Activated CD4-positive, alpha-beta T cell treated with anti-CD3 and anti-CD28 coated beads, Interleukin-2, amount 10 ng/mL, durations not matched to agents 24 days and 14 days (primary cell): ENCODE measurements at regions of chr1 and their contacts with region 1.

Region 1: DNA sequence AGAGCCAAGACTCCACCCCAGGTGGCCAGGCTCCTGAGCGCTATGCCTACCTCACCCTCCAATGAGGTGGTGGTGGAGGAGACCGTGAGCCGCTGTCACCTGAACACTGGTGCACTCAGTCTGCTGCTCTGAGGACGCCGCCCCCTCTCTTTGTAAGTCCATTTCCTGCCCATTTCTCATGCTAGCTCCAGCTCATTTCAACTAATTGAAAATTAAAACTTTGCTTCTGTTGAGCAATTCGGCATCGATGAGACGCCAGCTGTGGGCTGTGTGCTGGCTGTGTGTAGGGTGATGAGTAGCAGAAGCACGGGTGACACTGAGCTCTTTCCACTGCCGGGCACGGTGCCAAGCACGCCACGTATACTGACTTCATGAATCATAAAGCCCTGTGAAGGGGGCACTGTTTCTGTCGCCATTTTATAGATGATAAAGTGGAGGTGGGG is 11.2 kb downstream of the TNFRSF1B start:
- DNase-seq: peak; percentile 89
- H3K4me3 Mint-ChIP-seq: peak overlapping the region; percentile 80
- H3K27ac Mint-ChIP-seq: peak overlapping the region; percentile 88
- H3K4me1 Mint-ChIP-seq: peaks cover 80% of the 10 kb centered on the region
- H3K27me3 Mint-ChIP-seq: no peaks in the 10 kb centered on the region

Region 2: DNA sequence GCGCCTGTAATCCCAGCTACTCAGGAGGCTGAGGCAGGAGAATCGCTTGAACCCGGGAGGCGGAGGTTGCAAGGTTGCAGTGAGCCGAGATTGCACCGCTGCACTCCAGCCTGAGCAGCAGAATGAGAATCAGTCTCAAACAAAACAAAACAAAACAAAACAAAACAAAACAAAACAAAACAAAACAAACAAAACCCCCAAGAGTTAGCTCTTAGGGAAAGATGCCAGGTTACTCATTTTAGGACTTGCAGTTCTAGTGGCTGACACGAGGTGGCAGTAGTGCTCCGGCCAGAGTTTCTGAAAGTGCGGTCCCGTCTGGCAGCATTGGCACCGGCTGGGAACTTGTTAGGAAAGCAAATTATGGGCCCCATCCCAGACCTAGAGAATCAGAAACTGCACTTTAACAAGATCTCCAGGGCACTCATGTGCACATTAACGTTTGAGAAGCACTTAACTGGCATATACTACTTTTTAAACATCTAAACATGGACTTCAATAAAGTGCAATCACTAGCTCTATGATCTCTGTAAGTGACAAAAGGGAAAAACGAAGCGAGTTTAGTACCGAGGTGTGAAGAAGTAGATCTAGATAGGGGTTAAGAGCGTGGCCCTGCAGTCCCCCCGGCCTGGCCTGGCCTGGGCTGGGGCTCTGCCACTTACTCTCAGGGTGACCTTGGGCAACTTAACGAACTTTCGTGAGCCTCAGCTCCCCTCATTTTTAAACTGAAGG is 53.2 kb before region 1 on chr1:
- intact Hi-C with region 1: loop called (anchors 1 kb)
- DNase-seq: peak; percentile 94
- H3K4me3 Mint-ChIP-seq: peak overlapping the region; percentile 38
- H3K27ac Mint-ChIP-seq: peak overlapping the region; percentile 49
- H3K4me1 Mint-ChIP-seq: peaks cover 35% of the 10 kb centered on the region
- H3K27me3 Mint-ChIP-seq: no peaks in the 10 kb centered on the region

Region 3: DNA sequence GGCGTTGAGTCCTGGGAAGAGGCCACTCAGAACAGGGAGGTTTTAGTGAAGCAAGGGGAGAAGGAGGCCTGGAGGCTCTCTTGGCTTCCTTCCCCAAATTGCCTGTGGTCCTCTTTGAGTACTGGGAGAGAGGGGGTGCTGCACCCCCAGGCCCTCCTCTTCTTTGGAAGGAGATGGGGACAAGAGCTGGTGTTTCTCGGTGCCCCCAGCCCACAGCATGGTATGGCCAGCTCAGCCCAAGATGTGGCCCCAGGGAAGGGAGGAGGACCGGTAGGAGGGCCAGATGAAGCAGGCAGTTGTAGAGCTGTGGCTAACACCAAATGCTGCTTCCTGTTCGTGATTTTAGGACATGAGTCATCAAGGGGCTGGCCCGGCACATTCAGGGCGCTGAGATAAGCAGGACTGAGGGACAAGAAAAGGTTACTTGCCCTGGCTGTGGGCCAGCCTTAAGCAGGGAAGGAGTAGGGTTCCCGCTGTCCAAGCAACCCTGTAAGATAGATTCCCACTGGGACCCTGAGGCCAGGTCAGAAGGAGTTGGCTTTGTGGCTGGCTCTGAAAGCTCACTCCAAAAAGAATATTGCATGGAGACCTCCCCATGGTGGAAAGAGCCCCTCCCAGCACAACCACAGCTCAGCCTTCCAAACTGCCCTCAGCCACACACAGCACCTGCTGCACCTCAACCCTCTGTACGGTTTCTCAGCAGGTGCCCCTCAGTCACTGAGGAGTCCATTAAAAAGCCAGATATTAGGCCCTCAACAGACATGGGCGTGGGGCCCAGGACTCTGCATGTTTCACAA is 16.2 kb before region 1 on chr1:
- intact Hi-C with region 1: loop called (anchors 1 kb)
- DNase-seq: peak; percentile 93
- H3K4me3 Mint-ChIP-seq: peak overlapping the region; percentile 76
- H3K27ac Mint-ChIP-seq: peak overlapping the region; percentile 95
- H3K4me1 Mint-ChIP-seq: peaks cover 77% of the 10 kb centered on the region
- H3K27me3 Mint-ChIP-seq: no peaks in the 10 kb centered on the region

Region 4: GRCh38 chr1:12166834-12167492 is 11.1 kb before region 1 on chr1 and contains the start of gene TNFRSF1B:
- intact Hi-C with region 1: loop called (anchors 1 kb)
- DNase-seq: peak; percentile 95
- H3K4me3 Mint-ChIP-seq: peak within 1 kb of the TSS; percentile 100
- H3K27ac Mint-ChIP-seq: peak within 1 kb of the TSS; percentile 100
- H3K4me1 Mint-ChIP-seq: peaks cover 71% of the 10 kb centered on the region
- H3K27me3 Mint-ChIP-seq: no peaks in the 10 kb centered on the region
- total RNA-seq, gene TNFRSF1B: 145 TPM in 2 replicates

Region 5: DNA sequence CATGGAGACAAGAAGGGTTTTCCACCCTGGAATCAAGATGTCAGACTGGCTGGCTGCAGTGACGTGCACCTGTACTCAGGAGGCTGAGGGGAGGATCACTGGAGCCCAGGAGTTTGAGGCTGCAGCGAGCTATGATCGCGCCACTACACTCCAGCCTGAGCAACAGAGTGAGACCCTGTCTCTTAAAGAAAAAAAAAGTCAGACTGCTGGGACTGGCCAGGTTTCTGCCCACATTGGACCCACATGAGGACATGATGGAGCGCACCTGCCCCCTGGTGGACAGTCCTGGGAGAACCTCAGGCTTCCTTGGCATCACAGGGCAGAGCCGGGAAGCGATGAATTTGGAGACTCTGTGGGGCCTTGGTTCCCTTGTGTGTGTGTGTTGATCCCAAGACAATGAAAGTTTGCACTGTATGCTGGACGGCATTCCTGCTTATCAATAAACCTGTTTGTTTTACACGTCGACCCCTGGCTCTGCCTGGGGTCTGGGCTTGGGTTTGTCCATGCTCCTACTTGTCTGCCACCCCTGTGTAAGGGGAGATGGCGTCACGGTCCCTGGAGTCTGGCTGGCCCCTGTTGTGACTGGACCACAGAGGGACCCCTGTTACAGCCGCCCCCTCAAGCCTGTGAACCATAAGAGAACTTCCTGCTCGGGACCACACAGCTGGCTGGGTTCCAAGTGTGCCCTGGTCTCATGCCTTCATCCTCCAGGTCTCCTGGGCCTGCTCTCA is 30.9 kb after region 1 on chr1:
- intact Hi-C with region 1: loop called (anchors 1 kb)
- DNase-seq: peak; percentile 95
- H3K4me3 Mint-ChIP-seq: no peak overlapping the region
- H3K27ac Mint-ChIP-seq: peak overlapping the region; percentile 59
- H3K4me1 Mint-ChIP-seq: peaks cover 38% of the 10 kb centered on the region
- H3K27me3 Mint-ChIP-seq: peaks cover 2% of the 10 kb centered on the region

Region 6: GRCh38 chr1:12229386-12229834 is 51.4 kb after region 1 on chr1:
- intact Hi-C with region 1: no loop called
- DNase-seq: no peak
- H3K4me3 Mint-ChIP-seq: peak overlapping the region; percentile 56
- H3K27ac Mint-ChIP-seq: no peak overlapping the region
- H3K4me1 Mint-ChIP-seq: peaks cover 8% of the 10 kb centered on the region
- H3K27me3 Mint-ChIP-seq: peaks cover 6% of the 10 kb centered on the region

Region 7: DNA sequence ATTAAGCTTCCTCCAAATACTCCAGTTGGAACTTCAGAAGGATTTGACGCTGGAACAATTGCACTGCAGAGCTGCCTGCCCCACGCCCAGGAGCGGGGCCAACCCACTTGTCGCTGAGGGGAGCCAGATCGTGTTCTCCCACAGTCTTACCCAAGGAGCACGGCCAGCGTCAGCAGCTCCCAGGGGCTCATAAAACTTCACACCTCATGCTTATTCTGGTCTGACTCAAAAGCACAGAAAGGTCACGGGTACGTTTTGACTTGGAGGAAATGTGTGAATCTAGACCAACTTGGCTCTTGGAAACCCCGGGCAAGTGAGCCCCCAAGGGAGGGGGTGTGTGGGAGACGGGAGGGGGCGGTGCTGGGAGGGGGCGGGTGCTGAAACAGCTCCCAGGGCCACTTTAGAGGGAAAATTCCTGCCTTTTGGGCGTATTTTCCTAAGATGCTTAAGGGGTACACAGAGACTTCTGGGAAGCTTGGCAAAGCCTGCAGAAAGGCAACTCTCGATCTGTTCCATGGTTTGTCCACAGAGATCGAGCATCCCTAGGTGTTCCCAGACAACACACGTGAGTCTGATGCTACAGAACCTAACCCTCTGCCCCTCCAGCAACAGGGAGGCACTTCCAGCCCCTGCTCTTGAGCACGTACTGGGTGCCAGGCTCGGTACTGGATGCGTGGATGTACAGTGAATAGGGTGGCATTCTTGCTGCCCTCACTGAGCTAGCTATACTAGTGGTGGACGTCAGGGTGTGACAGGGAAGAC is 341.1 kb after region 1 on chr1:
- intact Hi-C with region 1: loop called (anchors 10 kb)
- DNase-seq: no peak
- H3K4me3 Mint-ChIP-seq: peak overlapping the region; percentile 35
- H3K27ac Mint-ChIP-seq: peak overlapping the region; percentile 81
- H3K4me1 Mint-ChIP-seq: peaks cover 29% of the 10 kb centered on the region
- H3K27me3 Mint-ChIP-seq: no peaks in the 10 kb centered on the region